Left colon (tissue), 2 donors: ENCODE measurements at regions of chr17 and their contacts with region 1.

Region 1: GRCh38 chr17:81484195-81484979 is 28.2 kb downstream of the ACTG1 start:
- DNase-seq: peak; percentile 86 to 92
- ATAC-seq: peak; percentile 77

Region 2: GRCh38 chr17:81253358-81254131 is 230.8 kb before region 1 on chr17:
- intact Hi-C with region 1: loop called in 1 of 2 experiments (anchors 10 kb)
- DNase-seq: peak in 1 of 2 donors; percentile 42
- ATAC-seq: no peak